GM12878 (cell line): ENCODE measurements at regions of chr1 and their contacts with region 1.

Region 1: GRCh38 chr1:14598497-14599172 is at the start of gene KAZN:
- DNase-seq: no peak
- ATAC-seq: no peak; the same call in 2 of the 3 replicates
- H3K4me3 ChIP-seq: peak within 1 kb of the TSS; percentile 49
- H3K27ac ChIP-seq: no peak within 1 kb of the TSS
- H3K4me1 ChIP-seq: peaks cover 11% of the 10 kb centered on the region
- H3K27me3 ChIP-seq: peaks cover 0 to 2% of the 10 kb centered on the region in 2 experiments; a peak in 3 of 4 replicates
- CTCF ChIP-seq: no peak
- EP300 ChIP-seq: no peak
- POLR2A ChIP-seq: no peak
- RAD21 ChIP-seq: no peak
- polyA plus RNA-seq, gene KAZN: 0.77 to 0.95 TPM

Region 2: GRCh38 chr1:14522926-14523241 is 75.8 kb before region 1 on chr1:
- CTCF ChIA-PET with region 1: interaction called, 3 read pairs
- POLR2A ChIA-PET with region 1: interaction called, 3 read pairs
- RAD21 ChIA-PET with region 1: interaction called, 7 read pairs
- SMC1A ChIA-PET with region 1: interaction called, 8 read pairs
- in situ Hi-C with region 1: no loop called
- intact Hi-C with region 1: loop called (anchors 5 kb)
- DNase-seq: no peak
- ATAC-seq: peak; percentile 75
- H3K4me3 ChIP-seq: no peak overlapping the region
- H3K27ac ChIP-seq: peak overlapping the region; percentile 22; the same call in 1 of the 2 replicates
- H3K4me1 ChIP-seq: peaks cover 45% of the 10 kb centered on the region
- H3K27me3 ChIP-seq: no peaks in the 10 kb centered on the region
- CTCF ChIP-seq: no peak
- EP300 ChIP-seq: no peak
- POLR2A ChIP-seq: no peak
- RAD21 ChIP-seq: no peak

Region 3: DNA sequence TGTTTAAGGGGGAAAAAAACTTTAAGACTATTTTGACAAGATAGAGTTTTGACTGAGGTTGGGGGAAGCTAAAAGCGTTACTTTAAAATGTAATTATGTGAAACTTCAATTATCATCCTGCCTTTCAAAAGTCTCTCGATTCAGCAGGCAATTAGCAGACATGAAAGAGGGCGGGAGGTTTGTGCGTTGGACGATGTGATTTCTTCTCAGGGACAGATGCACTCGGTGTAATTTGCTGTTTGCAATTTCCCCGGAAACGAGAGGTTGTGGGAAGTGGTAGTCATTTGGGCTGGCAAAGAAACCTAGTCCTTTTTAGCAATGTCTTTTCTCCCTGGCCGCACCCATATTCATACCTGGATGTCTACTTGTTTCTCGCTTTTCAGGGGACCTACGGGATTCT is 26.9 kb after region 1 on chr1:
- CTCF ChIA-PET with region 1: no interaction called
- POLR2A ChIA-PET with region 1: no interaction called
- RAD21 ChIA-PET with region 1: no interaction called
- SMC1A ChIA-PET with region 1: no interaction called
- in situ Hi-C with region 1: no loop called
- intact Hi-C with region 1: no loop called
- DNase-seq: no peak
- ATAC-seq: no peak
- H3K4me3 ChIP-seq: no peak overlapping the region
- H3K27ac ChIP-seq: no peak overlapping the region
- H3K4me1 ChIP-seq: no peaks in the 10 kb centered on the region
- H3K27me3 ChIP-seq: no peaks in the 10 kb centered on the region
- CTCF ChIP-seq: no peak
- EP300 ChIP-seq: no peak
- POLR2A ChIP-seq: no peak
- RAD21 ChIP-seq: no peak

Region 4: DNA sequence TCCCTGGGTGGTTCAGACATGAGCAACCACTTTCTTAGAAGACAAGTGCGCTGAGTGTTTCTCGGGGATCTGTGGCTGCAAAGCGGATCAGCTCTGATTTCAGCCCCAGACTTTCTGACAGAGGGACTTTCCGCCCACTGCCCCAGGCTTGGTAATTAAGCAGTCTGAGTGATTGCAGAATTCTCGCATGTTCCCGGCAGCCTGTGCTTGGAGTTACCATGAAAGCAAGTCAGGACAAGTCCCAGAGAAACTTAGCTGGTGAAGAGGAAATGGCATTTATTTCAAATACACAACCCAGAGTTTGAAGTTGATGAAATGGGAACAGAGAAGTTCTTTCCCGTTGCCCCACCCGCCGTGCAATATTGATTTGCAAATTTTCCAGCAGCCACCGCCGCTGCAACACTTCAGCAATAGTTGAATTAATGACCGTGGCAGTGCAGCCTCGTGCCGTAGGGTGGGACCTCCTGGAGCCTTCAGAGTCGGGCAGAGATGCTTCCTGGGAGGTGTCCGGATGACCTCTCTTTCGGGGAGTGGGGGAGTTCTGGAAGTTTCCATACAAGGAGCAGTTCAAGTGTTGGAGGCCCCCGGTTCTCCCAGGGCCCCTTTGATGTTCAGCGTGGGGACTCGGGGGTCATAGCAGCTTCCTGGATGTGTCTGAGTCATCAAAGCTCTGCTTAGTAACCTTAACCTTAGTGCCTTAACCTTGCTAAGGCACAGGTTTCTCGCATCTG is 134.6 kb after region 1 on chr1:
- CTCF ChIA-PET with region 1: interaction called, 3 read pairs
- POLR2A ChIA-PET with region 1: interaction called, 4 read pairs
- RAD21 ChIA-PET with region 1: no interaction called
- SMC1A ChIA-PET with region 1: interaction called, 5 read pairs
- in situ Hi-C with region 1: no loop called
- intact Hi-C with region 1: loop called (anchors 2 kb)
- DNase-seq: peak; percentile 65
- ATAC-seq: peak; percentile 86
- H3K4me3 ChIP-seq: no peak overlapping the region
- H3K27ac ChIP-seq: peak overlapping the region; percentile 17; the same call in 1 of the 2 replicates
- H3K4me1 ChIP-seq: peaks cover 8% of the 10 kb centered on the region
- H3K27me3 ChIP-seq: no peaks in the 10 kb centered on the region
- CTCF ChIP-seq: no peak
- EP300 ChIP-seq: peak; percentile 23 to 27; a peak in 2 of 4 replicates
- POLR2A ChIP-seq: no peak
- RAD21 ChIP-seq: 0 out of 2 replicates have a peak, but pooled peaks have one; percentile 1

Region 5: GRCh38 chr1:14778898-14779865 is 180.5 kb after region 1 on chr1:
- CTCF ChIA-PET with region 1: no interaction called
- POLR2A ChIA-PET with region 1: no interaction called
- RAD21 ChIA-PET with region 1: no interaction called
- SMC1A ChIA-PET with region 1: no interaction called
- in situ Hi-C with region 1: no loop called
- intact Hi-C with region 1: no loop called
- DNase-seq: no peak
- ATAC-seq: peak; percentile 48; the same call in 1 of the 3 replicates
- H3K4me3 ChIP-seq: no peak overlapping the region
- H3K27ac ChIP-seq: no peak overlapping the region
- H3K4me1 ChIP-seq: no peaks in the 10 kb centered on the region
- H3K27me3 ChIP-seq: no peaks in the 10 kb centered on the region
- CTCF ChIP-seq: peak; percentile 49 to 75 (median 73)
- EP300 ChIP-seq: no peak
- POLR2A ChIP-seq: no peak
- RAD21 ChIP-seq: peak; percentile 55

Region 6: DNA sequence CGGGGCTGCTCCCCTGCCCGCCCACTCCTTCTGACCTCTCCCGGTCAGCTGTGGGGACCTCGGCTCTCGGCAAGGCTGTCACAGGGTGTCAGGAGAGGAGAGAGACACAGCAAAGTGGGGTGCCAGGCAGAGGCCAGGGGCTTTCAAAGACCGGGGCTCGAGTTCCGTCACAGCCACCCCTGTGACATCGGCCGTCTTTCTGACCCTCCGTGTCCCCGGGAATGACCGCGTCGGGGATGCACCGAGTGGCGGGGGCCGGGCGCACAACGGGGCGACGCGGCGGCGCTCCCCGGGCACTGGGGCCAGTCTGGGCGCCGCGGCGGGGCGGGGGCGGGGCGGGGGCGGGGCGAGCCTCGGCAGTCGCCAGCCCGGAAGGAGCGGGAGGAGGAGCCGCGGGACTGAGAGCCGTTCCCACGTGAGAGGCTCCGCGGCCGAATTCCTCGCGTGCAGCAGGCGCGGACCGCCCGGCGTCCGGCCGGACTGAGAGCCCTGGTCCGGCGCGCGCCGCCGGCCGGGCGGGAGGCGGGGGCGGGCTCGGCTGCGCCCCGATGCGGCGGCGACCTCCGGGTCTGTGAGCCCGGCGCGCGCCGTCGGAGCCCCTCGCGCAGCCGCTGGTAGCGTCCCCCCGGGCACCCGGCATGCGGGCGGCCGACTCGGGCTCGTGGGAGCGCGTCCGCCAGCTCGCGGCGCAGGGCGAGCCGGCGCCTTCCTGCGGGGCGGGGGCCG is 325.3 kb after region 1 on chr1:
- CTCF ChIA-PET with region 1: no interaction called
- POLR2A ChIA-PET with region 1: no interaction called
- RAD21 ChIA-PET with region 1: no interaction called
- SMC1A ChIA-PET with region 1: no interaction called
- in situ Hi-C with region 1: no loop called
- intact Hi-C with region 1: loop called (anchors 10 kb)
- DNase-seq: no peak
- ATAC-seq: peak; percentile 72
- H3K4me3 ChIP-seq: no peak overlapping the region
- H3K27ac ChIP-seq: no peak overlapping the region
- H3K4me1 ChIP-seq: no peaks in the 10 kb centered on the region
- H3K27me3 ChIP-seq: peaks cover 2 to 15% of the 10 kb centered on the region in 2 experiments; a peak in 3 of 4 replicates
- CTCF ChIP-seq: no peak
- EP300 ChIP-seq: no peak
- POLR2A ChIP-seq: no peak
- RAD21 ChIP-seq: no peak